ENCODE measurements at regions of chr6 and their contacts with region 1.

Region 1: DNA sequence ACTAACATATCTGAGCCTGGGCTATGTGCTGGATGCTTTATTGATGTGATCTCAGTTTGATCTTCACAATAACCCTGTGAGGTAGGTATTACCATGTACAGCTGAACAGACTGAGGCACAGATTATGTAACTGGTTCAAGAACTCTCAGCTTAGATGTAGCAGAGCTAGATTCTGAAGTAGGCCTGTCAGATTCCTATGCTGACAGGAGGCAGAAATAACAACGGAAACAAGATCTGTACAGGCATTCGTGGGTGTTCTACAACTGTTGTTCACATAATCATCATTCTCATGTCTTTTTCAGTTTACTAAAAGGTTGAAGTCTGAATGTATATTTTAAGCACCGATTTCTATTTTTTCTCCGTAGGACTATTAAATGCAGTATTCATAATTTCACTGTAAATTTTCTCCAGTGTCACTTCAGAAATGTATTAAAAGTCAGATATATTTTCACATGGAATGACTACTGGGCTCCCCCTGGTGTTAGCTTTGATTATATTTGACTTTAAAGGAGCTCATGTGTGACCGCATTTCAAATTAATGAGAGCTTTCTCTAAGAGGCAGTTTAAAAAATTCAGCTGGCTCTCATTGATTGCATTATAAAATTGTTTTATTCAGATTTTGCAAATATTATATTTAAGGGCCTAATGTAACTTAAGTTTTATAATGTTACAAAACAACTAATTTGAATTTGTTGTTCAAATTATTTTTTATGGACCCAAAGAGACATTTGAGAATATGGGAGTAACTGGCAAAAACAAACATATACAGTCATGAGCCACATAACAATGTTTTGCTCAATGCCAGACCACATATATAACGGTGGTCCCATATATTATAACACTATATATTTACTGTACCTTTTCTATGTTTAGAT is 36.4 kb upstream of the SLC17A4 start:
- DNase-seq: peak; percentile 6
- ATAC-seq: peak; percentile 63; the same call in 1 of the 2 replicates
- H3K4me3 ChIP-seq: no peak overlapping the region
- H3K27ac ChIP-seq: no peak overlapping the region
- H3K4me1 ChIP-seq: no peaks in the 10 kb centered on the region
- H3K27me3 ChIP-seq: no peaks in the 10 kb centered on the region
- CTCF ChIP-seq: peak; percentile 53
- POLR2A ChIP-seq: no peak
- RAD21 ChIP-seq: no peak

Region 2: GRCh38 chr6:25223490-25223991 is 494.6 kb before region 1 on chr6:
- CTCF ChIA-PET with region 1: interaction called, 4 read pairs
- POLR2A ChIA-PET with region 1: no interaction called
- dilution Hi-C with region 1: no loop called
- in situ Hi-C with region 1: no loop called
- intact Hi-C with region 1: loop called (anchors 1 kb)
- DNase-seq: peak; percentile 73
- ATAC-seq: peak; percentile 96
- H3K4me3 ChIP-seq: no peak overlapping the region
- H3K27ac ChIP-seq: no peak overlapping the region
- H3K4me1 ChIP-seq: no peaks in the 10 kb centered on the region
- H3K27me3 ChIP-seq: no peaks in the 10 kb centered on the region
- CTCF ChIP-seq: peak; percentile 95
- POLR2A ChIP-seq: no peak
- RAD21 ChIP-seq: peak; percentile 94

Region 3: DNA sequence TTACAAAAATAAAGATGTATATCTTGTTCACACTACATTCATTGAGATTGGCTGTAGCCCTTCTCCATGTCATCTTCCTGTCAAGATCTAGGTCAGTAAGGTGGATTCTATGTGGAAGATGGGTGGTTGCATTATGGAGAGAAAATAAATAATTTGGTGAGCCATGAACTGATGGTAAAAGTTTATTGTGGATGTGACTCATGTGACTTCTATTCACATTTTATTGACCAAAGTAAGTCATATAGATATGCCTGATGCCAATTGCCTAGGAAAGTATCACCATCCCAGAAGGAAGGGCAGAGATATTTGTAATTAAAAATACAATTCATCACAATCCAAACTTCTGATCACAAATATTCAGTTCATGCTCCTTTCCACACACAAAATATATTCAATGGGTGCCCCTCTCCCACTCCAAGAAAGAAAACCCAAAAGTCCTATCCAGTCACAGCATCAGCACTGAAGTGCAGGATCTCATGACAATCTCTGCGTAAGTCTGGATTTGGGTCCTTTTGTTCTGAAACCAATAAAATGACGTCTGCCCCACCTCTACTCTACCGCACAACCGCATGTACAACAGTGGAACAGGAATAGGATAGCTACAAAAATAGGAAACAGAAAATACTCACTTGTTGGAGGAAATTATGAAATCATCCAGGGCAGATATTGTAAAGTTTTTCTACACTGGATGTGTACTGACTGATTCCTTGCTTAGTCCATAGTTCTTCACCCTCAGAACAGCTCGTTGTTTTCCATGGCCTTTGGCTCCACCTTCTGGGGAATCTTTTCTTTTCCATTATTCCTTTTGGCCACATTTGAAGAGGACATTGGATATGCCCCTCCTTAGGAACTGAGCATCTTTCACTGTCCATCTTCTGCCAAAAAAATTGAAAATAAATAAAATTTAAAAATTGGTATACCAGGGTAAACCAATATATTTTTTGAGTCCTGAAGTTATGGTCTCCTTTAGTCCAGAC is 172.1 kb after region 1 on chr6:
- CTCF ChIA-PET with region 1: no interaction called
- POLR2A ChIA-PET with region 1: no interaction called
- dilution Hi-C with region 1: no loop called
- in situ Hi-C with region 1: no loop called
- intact Hi-C with region 1: loop called (anchors 2 kb)
- DNase-seq: peak; percentile 17
- ATAC-seq: peak; percentile 60
- H3K4me3 ChIP-seq: no peak overlapping the region
- H3K27ac ChIP-seq: no peak overlapping the region
- H3K4me1 ChIP-seq: no peaks in the 10 kb centered on the region
- H3K27me3 ChIP-seq: no peaks in the 10 kb centered on the region
- CTCF ChIP-seq: peak; percentile 38
- POLR2A ChIP-seq: no peak
- RAD21 ChIP-seq: peak; percentile 52

Region 4: GRCh38 chr6:25942561-25943147 is 224.6 kb after region 1 on chr6:
- CTCF ChIA-PET with region 1: no interaction called
- POLR2A ChIA-PET with region 1: no interaction called
- dilution Hi-C with region 1: no loop called
- in situ Hi-C with region 1: no loop called
- intact Hi-C with region 1: loop called (anchors 1 kb)
- DNase-seq: peak; percentile 55
- ATAC-seq: peak; percentile 64
- H3K4me3 ChIP-seq: no peak overlapping the region
- H3K27ac ChIP-seq: no peak overlapping the region
- H3K4me1 ChIP-seq: no peaks in the 10 kb centered on the region
- H3K27me3 ChIP-seq: no peaks in the 10 kb centered on the region; the same call in 1 of the 2 replicates
- CTCF ChIP-seq: peak; percentile 69
- POLR2A ChIP-seq: no peak
- RAD21 ChIP-seq: peak; percentile 76

Region 5: DNA sequence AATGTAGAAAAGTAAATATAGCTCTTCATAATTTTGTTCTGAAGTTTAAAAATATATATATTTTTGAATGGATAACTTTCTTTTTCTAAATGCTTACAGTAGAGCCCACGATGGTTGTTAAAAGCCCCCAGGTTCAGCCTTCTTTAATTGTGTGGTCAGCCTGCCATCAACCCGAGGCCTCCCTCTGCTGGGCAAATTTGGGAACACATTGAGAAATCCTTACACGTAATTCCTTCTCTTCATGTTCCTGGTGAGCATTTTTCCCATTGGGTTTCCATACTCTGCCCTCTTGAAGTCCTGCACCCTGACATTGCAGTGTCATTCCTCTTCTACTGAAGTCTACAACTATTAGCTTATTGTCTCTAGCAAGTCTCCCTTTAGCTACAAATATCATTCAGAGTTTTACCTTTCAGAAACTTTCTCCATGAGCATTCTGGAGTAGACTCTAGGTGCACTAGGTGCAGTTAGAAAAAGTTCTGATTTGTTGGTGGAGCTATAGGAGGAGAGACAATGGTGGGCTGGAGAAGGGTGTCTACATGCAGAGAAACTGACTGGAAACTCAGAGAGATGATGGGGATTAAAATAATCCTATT is 285.1 kb after region 1 on chr6:
- CTCF ChIA-PET with region 1: interaction called, 7 read pairs
- POLR2A ChIA-PET with region 1: no interaction called
- dilution Hi-C with region 1: no loop called
- in situ Hi-C with region 1: no loop called
- intact Hi-C with region 1: loop called (anchors 1 kb)
- DNase-seq: peak; percentile 56
- ATAC-seq: peak; percentile 84
- H3K4me3 ChIP-seq: no peak overlapping the region
- H3K27ac ChIP-seq: no peak overlapping the region
- H3K4me1 ChIP-seq: 0 out of 2 replicates have a peak, but pooled peaks cover 1% of the 10 kb centered on the region
- H3K27me3 ChIP-seq: no peaks in the 10 kb centered on the region
- CTCF ChIP-seq: peak; percentile 78
- POLR2A ChIP-seq: no peak
- RAD21 ChIP-seq: peak; percentile 79

Region 6: DNA sequence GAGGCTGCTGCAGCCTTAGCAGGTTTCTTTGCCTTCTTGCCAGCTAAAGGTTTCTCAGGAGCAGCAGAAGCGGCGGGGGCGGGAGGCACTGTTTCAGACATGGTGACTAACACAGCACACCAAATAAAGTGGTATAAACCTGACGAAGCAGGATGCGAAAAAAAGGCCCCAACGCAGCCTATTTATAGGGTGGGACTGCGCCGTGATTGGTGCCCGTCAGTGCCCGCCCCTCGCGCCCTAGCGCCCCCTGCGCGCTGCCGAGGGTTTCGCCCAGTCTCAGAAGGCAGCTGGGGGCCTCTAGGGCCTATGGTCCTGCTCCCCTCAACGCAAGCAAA is 299.5 kb after region 1 on chr6:
- CTCF ChIA-PET with region 1: no interaction called
- POLR2A ChIA-PET with region 1: no interaction called
- dilution Hi-C with region 1: no loop called
- in situ Hi-C with region 1: no loop called
- intact Hi-C with region 1: no loop called
- DNase-seq: peak; percentile 95
- ATAC-seq: peak; percentile 34
- H3K4me3 ChIP-seq: peak overlapping the region; percentile 44
- H3K27ac ChIP-seq: peak overlapping the region; percentile 78
- H3K4me1 ChIP-seq: peaks cover 12% of the 10 kb centered on the region
- H3K27me3 ChIP-seq: no peaks in the 10 kb centered on the region
- CTCF ChIP-seq: peak; percentile 72
- POLR2A ChIP-seq: peak; percentile 97
- RAD21 ChIP-seq: no peak

Region 7: GRCh38 chr6:26103770-26104456 is 385.8 kb after region 1 on chr6:
- CTCF ChIA-PET with region 1: no interaction called
- POLR2A ChIA-PET with region 1: no interaction called
- dilution Hi-C with region 1: no loop called
- in situ Hi-C with region 1: no loop called
- intact Hi-C with region 1: no loop called
- DNase-seq: peak; percentile 95
- ATAC-seq: peak; percentile 83
- H3K4me3 ChIP-seq: peak overlapping the region; percentile 45
- H3K27ac ChIP-seq: peak overlapping the region; percentile 52
- H3K4me1 ChIP-seq: peaks cover 5% of the 10 kb centered on the region; the same call in 1 of the 2 replicates
- H3K27me3 ChIP-seq: no peaks in the 10 kb centered on the region
- CTCF ChIP-seq: peak; percentile 39
- POLR2A ChIP-seq: peak; percentile 99
- RAD21 ChIP-seq: peak; percentile 44

Measured in IMR-90 (cell line).